Astrocyte of the cerebellum (primary cell): ENCODE measurements at regions of chr12 and their contacts with region 1.

Region 1: GRCh38 chr12:49232940-49233841 is 31.7 kb upstream of the TUBA1C start:
- DNase-seq: no peak
- H3K4me3 ChIP-seq: peak overlapping the region; percentile 20
- CTCF ChIP-seq: peak; percentile 20

Region 2: DNA sequence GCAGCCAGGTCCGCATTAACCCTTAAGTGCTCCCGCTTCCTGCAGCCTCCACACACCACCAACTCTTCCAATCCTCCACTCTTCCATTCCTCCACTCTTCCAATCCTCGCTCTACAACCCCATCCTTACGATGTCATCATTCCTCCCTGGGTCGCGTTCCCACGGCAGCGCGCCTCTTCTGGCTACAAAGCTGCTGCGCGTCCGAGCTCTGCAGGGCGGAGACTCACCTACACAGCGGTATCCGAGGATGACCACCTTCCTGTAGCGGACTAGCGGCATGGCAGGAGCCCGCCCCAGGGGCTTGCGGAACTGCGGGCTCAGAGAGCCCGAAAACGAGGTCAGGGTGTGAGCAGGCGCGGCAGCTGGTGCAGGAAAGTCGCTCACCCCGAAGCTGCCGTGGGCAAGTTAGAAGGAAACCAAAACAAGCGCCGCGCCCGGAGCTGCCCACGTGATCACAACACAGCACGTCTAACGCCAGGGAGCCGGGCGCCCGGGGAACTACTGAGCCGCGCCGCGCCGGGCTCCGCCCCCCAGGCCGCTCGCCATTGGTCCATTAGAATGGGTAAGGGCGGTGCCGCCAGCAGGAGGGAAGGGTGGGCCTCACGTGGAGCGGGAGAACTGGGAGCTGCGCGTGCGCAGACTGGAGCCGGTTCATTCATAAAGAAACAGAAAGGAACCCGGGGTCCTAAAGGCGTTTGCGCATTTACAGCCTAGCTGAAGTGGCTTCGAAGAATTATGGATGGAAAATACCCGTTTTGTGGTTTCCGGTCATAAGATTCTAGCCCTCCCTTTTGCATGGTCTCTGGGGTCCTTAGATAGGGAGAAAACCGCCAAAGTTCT is 163.5 kb before region 1 on chr12 and contains the start of gene RHEBL1:
- in situ Hi-C with region 1: loop called (anchors 10 kb)
- DNase-seq: peak; percentile 77
- H3K4me3 ChIP-seq: peak within 1 kb of the TSS; percentile 71
- CTCF ChIP-seq: no peak

Region 3: GRCh38 chr12:49161092-49161795 is 71.9 kb before region 1 on chr12:
- in situ Hi-C with region 1: loop called (anchors 5 kb)
- DNase-seq: no peak
- H3K4me3 ChIP-seq: no peak overlapping the region
- CTCF ChIP-seq: no peak

Region 4: GRCh38 chr12:49200919-49201594 is 32.1 kb before region 1 on chr12:
- in situ Hi-C with region 1: loop called (anchors 5 kb)
- DNase-seq: peak; percentile 87
- H3K4me3 ChIP-seq: no peak overlapping the region
- CTCF ChIP-seq: no peak

Region 5: DNA sequence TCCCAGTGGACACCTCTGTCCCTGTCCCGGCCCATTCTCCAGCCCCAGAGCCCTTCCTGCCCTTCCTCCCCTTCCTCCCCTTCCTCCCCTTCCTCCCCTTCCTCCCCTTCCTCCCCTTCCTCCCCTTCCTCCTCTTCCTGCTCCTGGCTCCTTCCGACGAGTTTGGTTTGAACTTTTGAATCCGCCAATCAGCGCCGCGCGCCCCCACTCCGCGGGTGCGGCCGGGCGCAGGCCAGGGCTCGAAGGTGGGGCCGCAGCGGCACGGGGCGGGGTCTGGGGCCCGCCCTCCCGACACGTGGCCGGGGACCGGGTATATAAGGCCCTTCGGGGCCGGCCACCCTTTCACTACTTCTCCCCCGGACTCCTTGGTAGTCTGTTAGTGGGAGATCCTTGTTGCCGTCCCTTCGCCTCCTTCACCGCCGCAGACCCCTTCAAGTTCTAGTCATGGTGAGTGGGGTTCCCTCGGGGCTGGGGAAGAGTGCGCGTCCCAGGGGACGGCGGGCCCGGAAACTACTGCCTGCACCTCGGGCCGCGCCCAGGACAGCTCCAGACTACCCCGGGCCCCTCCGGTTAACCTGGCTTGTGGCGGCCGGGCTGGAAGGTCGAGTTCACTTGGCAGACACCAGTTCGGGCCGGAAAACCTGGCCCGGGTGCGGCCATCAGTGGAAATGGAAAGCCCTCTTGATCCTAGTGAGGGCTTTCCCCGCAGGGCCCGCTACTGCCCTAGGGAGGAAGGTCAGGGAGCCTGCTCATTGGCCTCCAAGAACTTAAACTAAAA is 31.7 kb after region 1 on chr12 and contains the start of gene TUBA1C:
- in situ Hi-C with region 1: loop called (anchors 5 kb)
- DNase-seq: peak; percentile 65
- H3K4me3 ChIP-seq: peak within 1 kb of the TSS; percentile 94
- CTCF ChIP-seq: no peak